HCT116 (cell line): ENCODE measurements at regions of chr17 and their contacts with region 1.

Region 1: DNA sequence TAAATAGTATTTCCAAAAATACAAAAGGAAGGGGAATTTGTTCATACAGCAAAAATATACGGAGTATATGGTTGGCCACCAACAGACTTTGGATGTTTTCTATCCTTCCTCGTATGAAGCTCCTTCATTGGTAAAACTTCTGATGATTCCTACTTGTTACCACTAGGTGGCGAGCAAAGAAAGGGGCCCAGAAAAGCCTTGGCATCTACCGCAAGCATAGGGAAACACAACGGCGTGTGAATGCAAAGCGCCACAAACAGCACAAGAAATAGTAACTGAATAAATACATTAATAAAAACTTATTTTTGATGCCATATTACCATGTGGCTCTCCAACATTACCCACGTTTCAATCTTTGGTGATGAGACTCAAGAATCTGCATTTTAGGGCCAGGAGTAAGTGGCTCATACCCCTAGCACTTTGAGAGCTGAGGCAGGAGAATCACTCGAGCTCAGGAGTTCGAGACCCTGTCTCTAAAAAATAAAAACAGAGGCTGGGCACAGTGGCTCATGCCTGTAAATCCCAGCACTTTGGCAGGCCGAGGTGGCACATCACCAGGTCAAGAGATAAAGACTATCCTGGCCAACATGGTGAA is 34.5 kb downstream of the YWHAE start:
- DNase-seq: peak; percentile 59
- ATAC-seq: peak; percentile 84
- H3K4me3 ChIP-seq: no peak overlapping the region
- H3K27ac ChIP-seq: no peak overlapping the region; the same call in 1 of the 2 replicates
- H3K4me1 ChIP-seq: peaks cover 9 to 52% of the 10 kb centered on the region in 2 experiments; a peak in 3 of 4 replicates
- H3K27me3 ChIP-seq: no peaks in the 10 kb centered on the region
- CTCF ChIP-seq: peak; percentile 70 to 85 (median 80); a peak in 5 of 6 replicates
- POLR2A ChIP-seq: no peak
- RAD21 ChIP-seq: peak; percentile 84

Region 2: DNA sequence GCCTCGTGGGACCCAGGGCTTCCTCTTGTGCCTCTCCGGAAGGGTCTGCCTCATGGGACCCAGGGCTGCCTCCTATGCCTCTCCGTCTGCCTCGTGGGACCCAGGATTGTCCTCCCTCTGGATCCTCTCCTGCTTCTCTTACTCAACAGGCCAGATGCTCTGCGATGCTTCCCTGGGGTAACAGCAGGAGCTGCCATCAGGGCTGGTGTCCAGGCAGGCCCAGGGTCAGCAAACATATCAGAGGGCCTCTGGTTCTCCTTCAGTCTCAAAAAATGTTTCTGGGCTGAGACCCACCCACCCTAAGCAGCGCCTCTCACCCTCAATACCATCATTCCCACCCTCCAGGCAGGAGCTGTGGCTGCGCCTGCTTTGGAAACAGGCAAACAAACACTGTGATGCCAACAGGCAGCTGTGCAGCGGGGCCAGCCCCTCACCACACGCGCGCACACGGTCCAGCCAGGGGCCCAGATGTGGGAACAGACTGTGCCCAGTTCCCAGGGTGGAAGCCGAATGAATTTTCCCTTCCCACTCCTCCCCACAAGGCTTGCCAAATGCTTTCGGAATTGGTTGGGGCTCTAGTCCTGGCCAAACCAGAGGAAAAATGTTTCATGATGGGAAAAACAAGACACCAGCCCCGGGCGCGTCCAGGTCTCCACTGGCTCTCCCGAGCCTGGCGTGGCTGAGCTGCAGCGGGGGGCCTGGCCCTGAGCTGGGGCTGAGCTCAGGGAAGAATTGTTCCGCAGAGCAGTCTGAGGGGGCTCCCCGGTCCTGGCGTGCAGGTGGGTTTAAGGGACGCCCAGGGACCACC is 357.3 kb before region 1 on chr17:
- CTCF ChIA-PET with region 1: no interaction called
- POLR2A ChIA-PET with region 1: no interaction called
- RAD21 ChIA-PET with region 1: no interaction called
- intact Hi-C with region 1: no loop called
- DNase-seq: no peak
- ATAC-seq: no peak
- H3K4me3 ChIP-seq: no peak overlapping the region
- H3K27ac ChIP-seq: no peak overlapping the region
- H3K4me1 ChIP-seq: no peaks in the 10 kb centered on the region
- H3K27me3 ChIP-seq: no peaks in the 10 kb centered on the region
- CTCF ChIP-seq: no peak
- POLR2A ChIP-seq: no peak
- RAD21 ChIP-seq: no peak

Region 3: GRCh38 chr17:1186923-1187771 is 178.4 kb before region 1 on chr17:
- CTCF ChIA-PET with region 1: no interaction called
- POLR2A ChIA-PET with region 1: no interaction called
- RAD21 ChIA-PET with region 1: no interaction called
- intact Hi-C with region 1: no loop called
- DNase-seq: peak; percentile 72
- ATAC-seq: peak; percentile 96
- H3K4me3 ChIP-seq: 0 out of 4 replicates have a peak overlapping the region, but pooled peaks of 1 of the 2 experiments have one; percentile 5
- H3K27ac ChIP-seq: no peak overlapping the region
- H3K4me1 ChIP-seq: peaks cover 7 to 36% of the 10 kb centered on the region in 2 experiments; a peak in 3 of 4 replicates
- H3K27me3 ChIP-seq: peaks cover 5% of the 10 kb centered on the region; the same call in 1 of the 2 replicates
- CTCF ChIP-seq: peak; percentile 90 to 99 (median 97)
- POLR2A ChIP-seq: no peak
- RAD21 ChIP-seq: peak; percentile 85

Region 4: DNA sequence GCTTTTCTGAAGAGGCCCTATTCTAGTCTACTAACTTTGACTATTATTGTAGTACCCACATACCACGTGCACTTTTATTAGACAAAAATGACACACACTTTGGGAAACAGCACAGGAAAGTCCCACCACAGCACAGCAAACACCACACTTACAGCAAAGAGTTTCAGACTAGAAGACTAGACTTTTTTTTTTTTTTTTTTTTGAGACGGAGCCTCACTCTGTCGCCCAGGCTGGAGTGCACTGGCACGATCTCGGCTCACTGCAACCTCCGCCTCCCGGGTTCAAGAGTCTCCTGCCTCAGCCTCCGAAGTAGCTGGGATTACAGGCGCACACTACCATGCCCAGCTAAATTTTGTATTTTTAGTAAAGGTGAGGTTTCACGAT is 14.4 kb after region 1 on chr17:
- CTCF ChIA-PET with region 1: interaction called, 17 read pairs
- POLR2A ChIA-PET with region 1: interaction called, 3 read pairs
- RAD21 ChIA-PET with region 1: interaction called in 1 of 2 experiments, 3 read pairs
- intact Hi-C with region 1: no loop called
- DNase-seq: no peak
- ATAC-seq: no peak
- H3K4me3 ChIP-seq: no peak overlapping the region
- H3K27ac ChIP-seq: no peak overlapping the region
- H3K4me1 ChIP-seq: peaks cover 16 to 50% of the 10 kb centered on the region in 2 experiments
- H3K27me3 ChIP-seq: no peaks in the 10 kb centered on the region
- CTCF ChIP-seq: no peak
- POLR2A ChIP-seq: no peak
- RAD21 ChIP-seq: no peak

Region 5: GRCh38 chr17:1384905-1385435 is 19.4 kb after region 1 on chr17:
- CTCF ChIA-PET with region 1: interaction called, 24 read pairs
- POLR2A ChIA-PET with region 1: interaction called, 4 read pairs
- RAD21 ChIA-PET with region 1: no interaction called
- intact Hi-C with region 1: no loop called
- DNase-seq: no peak
- ATAC-seq: no peak
- H3K4me3 ChIP-seq: no peak overlapping the region
- H3K27ac ChIP-seq: no peak overlapping the region
- H3K4me1 ChIP-seq: peaks cover 29 to 76% of the 10 kb centered on the region in 2 experiments
- H3K27me3 ChIP-seq: no peaks in the 10 kb centered on the region
- CTCF ChIP-seq: no peak
- POLR2A ChIP-seq: no peak
- RAD21 ChIP-seq: no peak

Region 6: DNA sequence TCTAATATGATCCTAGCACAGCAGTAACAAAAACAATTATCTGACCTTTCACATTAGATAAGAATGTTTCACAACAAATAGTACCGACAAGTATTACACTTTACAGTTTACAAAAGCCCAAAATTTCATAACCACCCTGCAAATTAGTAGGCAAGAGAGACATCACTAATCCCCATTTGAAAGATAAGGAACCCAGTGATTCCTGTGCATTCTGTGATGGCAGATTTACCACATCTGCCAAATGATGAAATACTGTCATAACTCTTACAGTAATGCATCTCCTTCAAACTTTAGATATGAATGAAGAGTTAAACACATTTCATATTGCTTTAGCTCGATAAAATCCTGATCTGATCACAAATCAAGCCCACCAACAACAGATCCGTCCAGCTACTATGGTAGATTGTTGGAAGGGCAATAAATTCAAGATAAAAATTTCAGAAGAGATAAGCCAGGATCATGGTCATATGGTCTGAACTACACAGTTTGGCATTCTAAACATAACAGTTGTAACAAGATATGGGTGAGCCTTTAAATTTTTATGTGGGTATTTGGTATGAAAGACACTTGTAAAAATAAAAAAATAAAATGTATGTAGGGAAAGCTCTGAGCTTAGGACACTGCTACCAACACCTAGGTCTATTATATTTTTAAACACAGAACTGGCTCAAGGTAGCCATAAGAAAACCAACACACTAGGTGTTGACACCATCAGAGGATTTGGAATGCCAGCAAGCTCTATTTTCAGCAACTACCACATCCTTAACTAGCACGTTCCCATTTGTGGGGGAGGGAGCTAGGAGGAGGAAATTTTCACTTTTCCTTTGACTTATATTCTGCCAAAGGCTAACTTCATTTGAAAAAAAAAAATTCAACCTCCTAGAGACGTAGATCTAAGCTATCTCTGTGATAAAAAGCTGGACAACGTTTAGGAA is 25.2 kb after region 1 on chr17:
- CTCF ChIA-PET with region 1: interaction called, 24 read pairs
- POLR2A ChIA-PET with region 1: interaction called, 4 read pairs
- RAD21 ChIA-PET with region 1: no interaction called
- intact Hi-C with region 1: no loop called
- DNase-seq: no peak
- ATAC-seq: no peak
- H3K4me3 ChIP-seq: no peak overlapping the region
- H3K27ac ChIP-seq: no peak overlapping the region
- H3K4me1 ChIP-seq: peaks cover 50 to 82% of the 10 kb centered on the region in 2 experiments
- H3K27me3 ChIP-seq: no peaks in the 10 kb centered on the region
- CTCF ChIP-seq: no peak
- POLR2A ChIP-seq: no peak
- RAD21 ChIP-seq: no peak

Region 7: DNA sequence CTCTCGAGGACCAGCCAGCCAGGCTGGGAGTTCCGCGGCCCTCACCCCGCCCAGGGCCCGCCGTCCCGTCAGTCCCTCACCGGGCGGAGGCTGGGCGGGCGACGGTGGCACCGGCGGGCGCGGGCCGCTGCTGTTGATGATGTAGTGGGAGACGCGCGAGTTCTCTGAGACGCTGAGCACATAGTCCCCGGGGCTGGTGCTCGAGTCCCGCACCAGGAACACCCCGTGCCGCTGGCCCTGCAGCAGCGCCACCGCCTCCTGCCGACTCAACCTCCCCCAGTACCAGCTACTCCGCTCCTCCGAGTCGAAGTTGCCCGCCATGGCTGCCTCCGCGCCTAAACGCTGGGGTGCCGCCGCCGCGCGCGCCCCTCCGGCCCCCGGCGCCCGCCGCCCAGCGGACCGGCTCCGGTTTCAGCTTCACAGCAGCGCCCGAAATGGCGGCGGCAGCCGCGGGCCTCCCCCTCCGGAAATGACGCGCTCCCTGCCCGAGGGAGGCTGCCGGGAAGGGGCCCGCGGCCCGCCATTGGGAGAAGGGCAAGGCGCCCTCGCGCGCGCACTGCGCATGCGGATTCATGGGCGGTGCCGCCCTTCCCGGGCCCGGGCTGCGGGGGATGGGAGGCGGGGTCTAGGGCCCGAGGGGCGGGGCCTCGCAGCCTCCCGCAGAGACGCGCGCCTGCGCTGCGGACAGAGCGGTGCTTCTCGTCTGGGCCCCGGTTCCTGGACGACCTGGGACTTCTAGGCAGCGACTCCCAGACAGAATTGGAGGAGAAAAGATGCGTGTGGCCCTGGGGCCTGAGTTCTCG is 90.5 kb after region 1 on chr17 and contains the start of gene CRK:
- CTCF ChIA-PET with region 1: interaction called, 4 read pairs
- POLR2A ChIA-PET with region 1: no interaction called
- RAD21 ChIA-PET with region 1: no interaction called
- intact Hi-C with region 1: loop called (anchors 2 kb)
- DNase-seq: peak; percentile 85
- ATAC-seq: peak; percentile 89
- H3K4me3 ChIP-seq: peak within 1 kb of the TSS; percentile 85 to 92
- H3K27ac ChIP-seq: peak within 1 kb of the TSS; percentile 96
- H3K4me1 ChIP-seq: peaks cover 24 to 37% of the 10 kb centered on the region in 2 experiments
- H3K27me3 ChIP-seq: no peaks in the 10 kb centered on the region
- CTCF ChIP-seq: no peak
- POLR2A ChIP-seq: peak; percentile 82
- RAD21 ChIP-seq: no peak
- total RNA-seq, gene CRK: 55.5 TPM

Region 8: GRCh38 chr17:1516388-1517161 is 151.0 kb after region 1 on chr17 and contains the start of gene INPP5K:
- CTCF ChIA-PET with region 1: interaction called, 22 read pairs
- POLR2A ChIA-PET with region 1: interaction called, 4 read pairs
- RAD21 ChIA-PET with region 1: interaction called, 3 to 5 read pairs
- intact Hi-C with region 1: loop called (anchors 1 kb)
- DNase-seq: peak; percentile 94
- ATAC-seq: peak; percentile 96
- H3K4me3 ChIP-seq: peak within 1 kb of the TSS; percentile 91 to 95
- H3K27ac ChIP-seq: peak within 1 kb of the TSS; percentile 82
- H3K4me1 ChIP-seq: peaks cover 13 to 29% of the 10 kb centered on the region in 2 experiments
- H3K27me3 ChIP-seq: no peaks in the 10 kb centered on the region
- CTCF ChIP-seq: 0 out of 6 replicates have a peak, but pooled peaks of 1 of the 3 experiments have one; percentile 8
- POLR2A ChIP-seq: peak; percentile 62
- RAD21 ChIP-seq: no peak
- total RNA-seq, gene INPP5K: 25.6 TPM